Transverse colon (tissue), 4 donors: ENCODE measurements at regions of chr1 and their contacts with region 1.

Region 1: GRCh38 chr1:168603501-168604110 is 27.2 kb downstream of the XCL1 start:
- DNase-seq: peak; percentile 82
- H3K4me3 ChIP-seq: no peak overlapping the region
- H3K27ac ChIP-seq: no peak overlapping the region
- H3K4me1 ChIP-seq: peaks cover 0 to 11% (median 1%) of the 10 kb centered on the region in 4 donors
- H3K27me3 ChIP-seq: no peaks in the 10 kb centered on the region
- CTCF ChIP-seq: peak; percentile 77 to 83 (median 81)
- EP300 ChIP-seq: no peak
- POLR2A ChIP-seq: no peak

Region 2: GRCh38 chr1:169133801-169134502 is 530.3 kb after region 1 on chr1:
- in situ Hi-C with region 1: loop called in 1 of 4 experiments (anchors 25 kb)
- intact Hi-C with region 1: no loop called
- DNase-seq: no peak
- H3K4me3 ChIP-seq: no peak overlapping the region
- H3K27ac ChIP-seq: peak overlapping the region in 1 of 4 donors; percentile 28
- H3K4me1 ChIP-seq: no peaks in the 10 kb centered on the region
- H3K27me3 ChIP-seq: no peaks in the 10 kb centered on the region
- CTCF ChIP-seq: peak in 3 of 5 experiments; percentile 13 to 19 (median 14)
- EP300 ChIP-seq: no peak
- POLR2A ChIP-seq: no peak

Region 3: GRCh38 chr1:169348383-169349036 is 744.9 kb after region 1 on chr1:
- in situ Hi-C with region 1: loop called (anchors 5 to 10 kb)
- intact Hi-C with region 1: loop called (anchors 5 kb)
- DNase-seq: no peak
- H3K4me3 ChIP-seq: no peak overlapping the region
- H3K27ac ChIP-seq: no peak overlapping the region
- H3K4me1 ChIP-seq: peaks cover 0 to 2% (median 0%) of the 10 kb centered on the region in 4 donors
- H3K27me3 ChIP-seq: no peaks in the 10 kb centered on the region
- CTCF ChIP-seq: peak; percentile 76 to 91 (median 84)
- EP300 ChIP-seq: no peak
- POLR2A ChIP-seq: no peak